Heart right ventricle (tissue), 16 donors: ENCODE measurements at regions of chr20 and their contacts with region 1.

Region 1: DNA sequence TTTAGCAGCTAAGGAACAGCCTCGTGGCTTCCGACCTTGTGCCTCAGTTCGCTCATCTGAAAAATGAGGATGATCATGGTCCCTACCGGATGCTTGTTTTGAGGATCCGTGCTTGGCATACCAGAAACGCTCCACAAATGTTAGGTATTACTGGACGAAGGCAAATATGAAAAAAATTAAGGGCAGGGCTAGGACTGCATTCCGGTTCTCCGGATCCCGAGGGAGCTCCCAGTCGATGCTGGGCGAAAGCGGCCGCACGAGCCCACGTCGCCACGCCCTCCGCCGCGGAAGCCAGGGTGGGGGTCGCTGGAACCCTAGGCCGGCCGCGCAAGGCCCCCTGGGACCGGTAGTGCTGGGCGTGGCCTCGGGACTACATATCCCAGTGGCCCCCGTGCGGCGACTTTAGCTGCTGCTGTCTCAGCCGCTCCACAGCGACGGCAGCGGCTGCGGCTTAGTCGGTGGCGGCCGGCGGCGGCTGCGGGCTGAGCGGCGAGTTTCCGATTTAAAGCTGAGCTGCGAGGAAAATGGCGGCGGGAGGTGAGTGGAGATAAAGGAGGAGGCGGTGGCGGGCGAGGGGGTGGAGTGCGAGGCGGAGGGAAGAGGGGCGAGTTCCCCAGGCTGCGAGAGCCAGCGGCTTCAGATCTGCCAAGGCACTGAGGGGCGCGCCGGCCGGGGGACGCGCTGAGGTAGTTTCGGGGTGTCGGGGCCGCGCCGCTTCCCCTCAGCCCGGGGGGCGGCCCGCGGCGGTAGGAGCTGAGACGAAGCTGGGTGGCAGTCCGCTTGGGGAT is at the start of gene NCOA3:
- DNase-seq: peak; percentile 95 to 97
- ATAC-seq: peak; percentile 97 to 99 (median 99)
- H3K4me3 ChIP-seq: peak within 1 kb of the TSS; percentile 82 to 100 (median 94)
- H3K27ac ChIP-seq: peak within 1 kb of the TSS; percentile 90 to 99 (median 94)
- H3K4me1 ChIP-seq: peaks cover 0 to 46% (median 26%) of the 10 kb centered on the region in 9 donors
- H3K27me3 ChIP-seq: no peaks in the 10 kb centered on the region
- CTCF ChIP-seq: peak; percentile 32 to 69 (median 58)
- total RNA-seq, gene NCOA3: 19.7 to 30.2 (median 22.6) TPM

Region 2: GRCh38 chr20:46757754-46758678 is 743.7 kb before region 1 on chr20:
- intact Hi-C with region 1: loop called in 1 of 10 experiments (anchors 10 kb)
- DNase-seq: peak; percentile 35 to 37
- ATAC-seq: peak in 4 of 8 donors; percentile 23 to 56 (median 48)
- H3K4me3 ChIP-seq: no peak overlapping the region
- H3K27ac ChIP-seq: no peak overlapping the region
- H3K4me1 ChIP-seq: peaks cover 0 to 4% (median 0%) of the 10 kb centered on the region in 9 donors
- H3K27me3 ChIP-seq: peaks cover 0 to 13% (median 0%) of the 10 kb centered on the region in 7 donors
- CTCF ChIP-seq: peak; percentile 80 to 95 (median 92)

Region 3: GRCh38 chr20:47411161-47411560 is 90.5 kb before region 1 on chr20:
- intact Hi-C with region 1: loop called in 2 of 10 experiments (anchors 10 kb)
- DNase-seq: peak in 1 of 2 donors; percentile 27
- ATAC-seq: peak; percentile 30 to 90 (median 76)
- H3K4me3 ChIP-seq: peak overlapping the region in 1 of 10 donors; percentile 6
- H3K27ac ChIP-seq: peak overlapping the region; percentile 36 to 77 (median 61)
- H3K4me1 ChIP-seq: peaks cover 6 to 46% (median 33%) of the 10 kb centered on the region in 9 donors
- H3K27me3 ChIP-seq: no peaks in the 10 kb centered on the region
- CTCF ChIP-seq: no peak

Region 4: GRCh38 chr20:47546184-47547033 is 44.7 kb after region 1 on chr20:
- intact Hi-C with region 1: loop called in 3 of 10 experiments (anchors 5 kb)
- DNase-seq: no peak
- ATAC-seq: no peak
- H3K4me3 ChIP-seq: no peak overlapping the region
- H3K27ac ChIP-seq: peak overlapping the region in 2 of 10 donors; percentile 23 to 34
- H3K4me1 ChIP-seq: peaks cover 5 to 63% (median 48%) of the 10 kb centered on the region in 9 donors
- H3K27me3 ChIP-seq: no peaks in the 10 kb centered on the region
- CTCF ChIP-seq: no peak

Region 5: GRCh38 chr20:47576516-47577033 is 74.9 kb after region 1 on chr20:
- intact Hi-C with region 1: loop called in 6 of 10 experiments (anchors 5 to 10 kb)
- DNase-seq: peak; percentile 39 to 83
- ATAC-seq: peak; percentile 88 to 97 (median 96)
- H3K4me3 ChIP-seq: peak overlapping the region in 7 of 10 donors; percentile 7 to 40 (median 34)
- H3K27ac ChIP-seq: peak overlapping the region in 9 of 10 donors; percentile 23 to 78 (median 51)
- H3K4me1 ChIP-seq: peaks cover 13 to 90% (median 71%) of the 10 kb centered on the region in 9 donors
- H3K27me3 ChIP-seq: no peaks in the 10 kb centered on the region
- CTCF ChIP-seq: peak in 1 of 9 donors; percentile 14

Region 6: DNA sequence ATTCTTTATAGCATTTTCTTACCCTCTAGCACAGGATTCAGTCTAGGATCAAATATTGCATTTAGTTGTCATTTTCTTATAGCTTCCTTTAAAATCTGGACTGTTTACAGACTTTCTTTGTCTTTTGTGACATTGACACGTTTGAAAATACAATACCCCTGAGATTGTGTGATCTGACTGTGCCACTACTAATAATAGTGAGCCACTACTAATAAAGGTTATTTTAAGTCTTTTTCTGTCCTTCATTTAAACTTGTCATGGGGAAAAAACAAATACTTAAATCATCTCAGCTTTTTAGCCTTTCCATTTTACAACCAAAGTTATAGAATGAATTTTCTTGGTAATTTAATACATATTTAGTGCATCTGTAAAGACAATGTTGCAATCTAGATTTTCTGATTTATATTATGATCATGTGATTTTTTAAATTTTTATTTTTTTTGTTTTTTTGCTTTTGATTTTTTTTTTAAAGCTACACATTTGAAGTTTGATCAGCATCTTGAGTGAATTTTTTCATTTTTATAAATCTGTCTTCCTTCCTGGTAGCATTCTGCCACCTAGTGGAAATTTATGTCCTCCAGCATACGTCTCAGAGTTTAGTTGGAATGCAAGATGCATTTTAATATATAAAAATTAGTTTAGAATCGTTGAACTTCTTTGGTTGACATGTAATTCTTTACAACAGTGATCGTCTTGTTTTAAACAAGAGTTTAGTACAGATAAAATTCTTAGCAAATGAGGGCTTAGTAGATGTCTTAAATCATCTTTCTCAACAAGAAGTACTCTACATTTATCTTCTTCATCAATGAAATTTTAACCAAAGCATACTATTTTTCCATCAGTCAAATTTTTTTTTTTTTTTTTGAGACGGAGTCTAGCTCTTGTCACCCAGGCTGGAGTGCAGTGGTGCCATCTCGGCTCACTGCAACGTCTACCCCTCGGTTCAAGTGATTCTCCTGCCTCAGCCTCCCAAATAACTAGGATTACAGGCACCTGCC is 119.4 kb after region 1 on chr20:
- intact Hi-C with region 1: loop called in 6 of 10 experiments (anchors 2 to 10 kb)
- DNase-seq: peak in 1 of 2 donors; percentile 23
- ATAC-seq: peak in 4 of 8 donors; percentile 49 to 64 (median 54)
- H3K4me3 ChIP-seq: no peak overlapping the region
- H3K27ac ChIP-seq: peak overlapping the region in 4 of 10 donors; percentile 4 to 35 (median 26)
- H3K4me1 ChIP-seq: peaks cover 0 to 33% (median 13%) of the 10 kb centered on the region in 9 donors
- H3K27me3 ChIP-seq: no peaks in the 10 kb centered on the region
- CTCF ChIP-seq: peak; percentile 80 to 96 (median 90)